Left ventricle myocardium inferior (tissue), 1 donor: ENCODE measurements at regions of chr11 and their contacts with region 1.

Region 1: GRCh38 chr11:59534676-59535075 is 23.3 kb downstream of the OR4D9 start:
- DNase-seq: no peak
- H3K4me3 ChIP-seq: no peak overlapping the region
- H3K27ac ChIP-seq: no peak overlapping the region
- H3K4me1 ChIP-seq: peaks cover 11% of the 10 kb centered on the region
- H3K27me3 ChIP-seq: peaks cover 5% of the 10 kb centered on the region
- CTCF ChIP-seq: no peak

Region 2: GRCh38 chr11:59429924-59430516 is 104.7 kb before region 1 on chr11:
- intact Hi-C with region 1: no loop called
- DNase-seq: no peak
- H3K4me3 ChIP-seq: no peak overlapping the region
- H3K27ac ChIP-seq: no peak overlapping the region
- H3K4me1 ChIP-seq: no peaks in the 10 kb centered on the region
- H3K27me3 ChIP-seq: peaks cover 14% of the 10 kb centered on the region
- CTCF ChIP-seq: peak; percentile 67

Region 3: GRCh38 chr11:59660621-59661020 is 125.9 kb after region 1 on chr11:
- intact Hi-C with region 1: no loop called
- DNase-seq: no peak
- H3K4me3 ChIP-seq: no peak overlapping the region
- H3K27ac ChIP-seq: no peak overlapping the region
- H3K4me1 ChIP-seq: peaks cover 32% of the 10 kb centered on the region
- H3K27me3 ChIP-seq: no peaks in the 10 kb centered on the region
- CTCF ChIP-seq: no peak

Region 4: DNA sequence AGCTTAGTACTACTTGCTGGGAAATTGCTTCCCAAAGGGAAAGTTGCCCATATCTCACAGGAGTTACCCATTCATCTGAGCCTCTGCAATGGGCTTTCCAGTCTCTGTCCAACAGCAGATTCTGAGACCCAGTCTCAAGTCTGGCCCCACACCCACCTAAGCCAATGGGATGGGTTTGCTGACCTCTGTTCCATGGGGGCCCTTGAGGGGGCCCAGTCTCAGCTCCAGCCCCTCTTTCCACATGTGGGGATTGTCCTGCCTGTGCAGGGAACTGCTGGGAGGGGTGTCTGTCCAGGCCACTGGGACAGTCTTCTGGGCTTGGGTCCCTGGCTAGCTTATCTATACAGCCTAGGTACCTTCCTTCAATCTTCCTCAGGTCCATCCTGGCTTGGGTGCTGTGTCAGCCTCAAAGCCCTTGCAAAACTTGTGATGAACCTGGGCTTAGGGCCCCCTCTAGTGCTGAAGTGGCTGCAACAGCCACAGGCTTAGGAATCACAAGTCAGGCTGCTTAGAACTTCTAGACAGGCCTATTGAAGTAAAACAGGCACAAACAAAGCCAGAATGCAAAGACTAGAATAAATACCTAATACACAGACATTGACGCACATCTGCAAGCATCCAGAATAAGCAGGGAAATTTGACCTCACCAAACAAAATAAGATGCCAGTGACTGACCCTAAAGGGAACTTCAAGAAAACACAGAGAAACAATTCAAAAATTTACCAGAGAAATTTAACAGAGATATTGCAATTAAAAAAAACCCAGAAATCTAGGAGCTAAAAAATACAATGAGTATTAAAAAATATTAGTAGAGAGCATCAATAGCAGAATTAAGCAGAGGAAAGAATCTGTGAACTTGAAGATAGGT is 145.8 kb after region 1 on chr11:
- intact Hi-C with region 1: loop called (anchors 10 kb)
- DNase-seq: peak; percentile 42
- H3K4me3 ChIP-seq: no peak overlapping the region
- H3K27ac ChIP-seq: no peak overlapping the region
- H3K4me1 ChIP-seq: no peaks in the 10 kb centered on the region
- H3K27me3 ChIP-seq: peaks cover 7% of the 10 kb centered on the region
- CTCF ChIP-seq: peak; percentile 79